Activated CD4-positive, alpha-beta T cell treated with anti-CD3 and anti-CD28 coated beads, Interleukin-2, amount 10 ng/mL, durations not matched to agents 24 days and 14 days (primary cell): ENCODE measurements at regions of chr14 and their contacts with region 1.

Region 1: DNA sequence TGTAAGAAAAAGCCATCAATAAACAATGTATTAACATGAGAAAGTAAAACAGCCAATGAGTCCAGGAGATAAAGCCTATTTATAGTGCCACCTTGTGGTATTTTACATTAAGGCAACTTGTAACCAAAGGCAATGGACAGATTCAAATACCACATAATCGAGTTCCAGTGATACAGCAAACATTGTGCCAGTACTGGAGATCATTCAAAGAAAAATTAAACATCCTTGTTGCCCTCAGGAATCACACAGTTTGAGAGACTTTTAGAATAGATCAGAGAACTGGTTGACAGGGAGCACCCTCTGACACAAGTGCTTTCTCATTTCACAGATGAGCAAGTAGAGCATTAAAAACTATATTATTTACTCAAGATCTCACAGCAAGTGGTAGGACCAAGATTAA is 98.1 kb downstream of the DDHD1 start:
- DNase-seq: peak; percentile 61
- H3K4me3 Mint-ChIP-seq: no peak overlapping the region
- H3K27ac Mint-ChIP-seq: no peak overlapping the region
- H3K4me1 Mint-ChIP-seq: peaks cover 4% of the 10 kb centered on the region
- H3K27me3 Mint-ChIP-seq: no peaks in the 10 kb centered on the region

Region 2: DNA sequence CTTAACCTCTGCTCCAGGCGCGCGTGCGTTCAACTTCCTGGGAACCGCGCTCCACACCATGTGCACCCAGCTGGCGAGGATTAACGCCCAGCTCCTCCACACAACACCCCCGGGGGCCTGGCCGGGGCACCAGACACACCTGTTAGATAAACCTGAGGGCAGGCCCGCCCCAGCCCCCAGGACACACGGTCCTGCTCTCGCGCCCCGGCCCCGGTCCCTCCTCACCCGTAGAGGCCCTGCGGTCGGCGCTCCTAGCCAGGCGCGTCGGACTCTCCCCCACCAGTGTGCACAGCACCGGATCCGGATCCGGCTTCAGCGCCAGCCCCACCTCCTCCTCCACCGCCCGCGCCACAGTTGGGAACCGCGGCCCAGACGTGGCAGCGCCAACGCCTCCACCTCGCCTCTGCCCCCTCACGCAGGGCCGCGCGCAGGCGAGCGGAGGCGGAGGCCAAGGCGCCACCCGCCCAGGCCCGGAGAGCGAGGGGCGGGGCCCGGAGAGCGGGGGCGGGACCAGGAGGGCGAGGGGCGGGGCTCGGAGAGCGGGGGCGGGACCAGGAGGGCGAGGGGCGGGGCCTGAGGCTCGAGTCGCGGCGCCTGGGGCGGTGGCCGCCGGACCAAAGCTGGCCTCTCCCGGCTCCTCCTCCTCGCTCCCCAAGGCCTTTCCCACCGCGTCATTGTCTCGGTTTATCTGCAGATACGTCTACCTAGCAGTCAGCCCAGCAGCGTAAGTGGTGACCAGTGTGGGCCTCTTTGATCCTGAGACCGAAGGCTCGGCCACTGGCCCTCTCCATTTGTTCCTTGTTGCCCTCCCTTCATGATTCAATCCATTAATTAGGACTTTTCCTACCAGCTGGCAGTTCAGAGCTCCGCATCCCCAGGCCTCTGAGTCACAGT is 263.6 kb before region 1 on chr14 and contains the start of gene GNPNAT1:
- intact Hi-C with region 1: no loop called
- DNase-seq: peak; percentile 96
- H3K4me3 Mint-ChIP-seq: peak within 1 kb of the TSS; percentile 97
- H3K27ac Mint-ChIP-seq: peak within 1 kb of the TSS; percentile 83
- H3K4me1 Mint-ChIP-seq: peaks cover 32% of the 10 kb centered on the region
- H3K27me3 Mint-ChIP-seq: no peaks in the 10 kb centered on the region
- total RNA-seq, gene GNPNAT1: 30.6 and 32.4 TPM in 2 replicates

Region 3: GRCh38 chr14:53306267-53306721 is 251.3 kb after region 1 on chr14:
- intact Hi-C with region 1: loop called (anchors 10 kb)
- DNase-seq: peak; percentile 77
- H3K4me3 Mint-ChIP-seq: peak overlapping the region; percentile 55
- H3K27ac Mint-ChIP-seq: no peak overlapping the region
- H3K4me1 Mint-ChIP-seq: peaks cover 11% of the 10 kb centered on the region
- H3K27me3 Mint-ChIP-seq: peaks cover 8% of the 10 kb centered on the region